ENCODE measurements at regions of chr2 and their contacts with region 1.

Region 1: GRCh38 chr2:177195194-177195593 is 17.4 kb upstream of the HNRNPA3 start:
- DNase-seq: peak in 1 of 3 donors; percentile 7
- H3K4me3 ChIP-seq: no peak overlapping the region
- H3K27ac ChIP-seq: no peak overlapping the region
- H3K4me1 ChIP-seq: no peaks in the 10 kb centered on the region
- H3K27me3 ChIP-seq: no peaks in the 10 kb centered on the region

Region 2: DNA sequence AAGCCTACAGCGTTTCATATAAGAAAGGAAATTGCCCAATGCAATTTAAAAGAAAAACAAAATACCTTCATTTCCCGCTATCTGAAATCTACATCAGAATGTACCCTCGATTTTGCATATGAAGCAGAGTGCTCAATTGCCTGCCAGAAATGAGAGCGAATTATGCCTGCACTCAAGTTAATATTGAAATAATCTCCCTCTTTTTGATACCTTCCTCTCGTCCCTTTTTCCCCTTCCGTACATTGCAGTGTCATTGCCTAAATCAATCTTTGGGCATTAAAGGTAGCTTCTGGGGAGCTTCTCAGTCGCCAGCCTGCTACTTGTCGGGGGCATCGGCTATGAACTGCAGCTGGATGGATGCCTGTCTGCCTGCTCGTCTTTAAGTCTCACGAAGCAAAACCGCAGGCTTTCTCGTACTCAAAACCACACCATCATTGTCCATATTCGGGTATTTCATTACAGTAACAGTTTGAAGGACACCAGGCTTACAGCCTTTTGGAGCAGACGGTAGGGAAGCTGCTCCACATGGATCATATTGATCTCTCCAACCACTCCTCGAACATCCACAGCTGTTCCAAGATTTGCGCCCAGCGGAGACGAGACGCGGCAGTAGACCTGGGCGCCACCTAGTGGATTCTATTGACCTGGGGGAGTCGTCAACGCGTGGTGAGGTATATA is 46.6 kb before region 1 on chr2:
- CTCF ChIA-PET with region 1: no interaction called
- POLR2A ChIA-PET with region 1: no interaction called
- DNase-seq: peak; percentile 73 to 88 (median 80)
- H3K4me3 ChIP-seq: peak overlapping the region in 6 of 7 experiments; percentile 63 to 76 (median 66)
- H3K27ac ChIP-seq: no peak overlapping the region
- H3K4me1 ChIP-seq: peaks cover under 1 to 13% (median 9%) of the 10 kb centered on the region in 4 experiments
- H3K27me3 ChIP-seq: peaks cover 0 to 25% (median 9%) of the 10 kb centered on the region in 5 experiments

Region 3: DNA sequence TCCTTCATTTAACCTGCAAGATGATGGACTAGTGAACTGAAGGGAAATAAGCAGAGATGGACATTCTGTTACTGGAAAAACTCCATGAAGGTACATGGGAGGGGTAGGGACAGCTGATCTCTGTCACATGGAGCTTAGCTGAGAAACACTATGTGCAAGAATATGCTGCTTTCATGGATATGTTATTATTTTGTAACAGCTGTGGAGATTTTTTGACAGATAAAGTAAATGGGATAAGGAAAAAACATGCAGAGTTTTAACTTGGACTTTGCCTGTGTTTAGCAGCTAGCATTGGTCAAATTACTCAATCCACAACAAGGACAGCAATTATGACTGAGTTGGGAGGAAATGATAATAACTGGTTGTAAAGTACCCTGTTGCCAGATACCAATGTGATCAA is 11.3 kb before region 1 on chr2:
- CTCF ChIA-PET with region 1: interaction called, 14 read pairs
- POLR2A ChIA-PET with region 1: no interaction called
- DNase-seq: no peak
- H3K4me3 ChIP-seq: no peak overlapping the region
- H3K27ac ChIP-seq: no peak overlapping the region
- H3K4me1 ChIP-seq: no peaks in the 10 kb centered on the region
- H3K27me3 ChIP-seq: no peaks in the 10 kb centered on the region

Region 4: DNA sequence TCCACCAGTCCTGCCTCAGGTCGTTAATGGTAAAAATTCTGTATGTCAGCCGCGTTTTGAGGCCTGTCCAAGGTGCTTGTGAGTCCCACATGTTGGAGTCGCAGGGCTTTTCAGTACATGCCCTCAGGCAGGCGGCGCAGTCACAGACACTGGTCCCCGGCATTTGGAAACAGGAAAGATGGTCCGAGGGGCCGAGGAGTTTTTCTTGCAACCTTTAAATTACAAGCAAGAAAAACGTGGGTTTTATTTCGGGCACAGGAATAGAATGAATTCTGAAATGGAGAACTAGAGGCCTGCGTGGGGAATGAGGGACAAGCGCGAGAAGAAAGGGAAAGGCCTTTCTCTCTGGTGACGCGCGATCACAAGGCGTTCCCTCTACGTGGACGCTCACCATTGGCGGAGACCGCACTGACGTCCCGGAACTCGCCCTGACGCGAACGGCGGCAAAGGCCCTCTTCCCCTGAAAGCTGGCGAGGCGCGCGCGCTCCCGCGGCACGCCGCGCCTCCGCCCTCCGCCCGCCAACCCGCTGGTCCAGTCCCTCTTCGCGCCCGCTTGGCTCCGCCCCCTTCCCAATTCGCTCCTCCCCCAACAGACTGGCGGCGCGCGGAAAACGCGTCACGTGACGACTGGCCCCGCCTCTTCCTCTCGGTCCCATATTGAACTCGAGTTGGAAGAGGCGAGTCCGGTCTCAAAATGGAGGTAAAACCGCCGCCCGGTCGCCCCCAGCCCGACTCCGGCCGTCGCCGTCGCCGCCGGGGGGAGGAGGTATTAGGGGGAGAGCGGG is 17.1 kb after region 1 on chr2 and contains the start of gene HNRNPA3:
- CTCF ChIA-PET with region 1: interaction called, 10 read pairs
- POLR2A ChIA-PET with region 1: interaction called, 5 read pairs
- DNase-seq: peak; percentile 99 to 100 (median 99)
- H3K4me3 ChIP-seq: peak within 1 kb of the TSS; percentile 55 to 97 (median 85)
- H3K27ac ChIP-seq: peak within 1 kb of the TSS; percentile 100
- H3K4me1 ChIP-seq: peaks cover 20 to 36% (median 29%) of the 10 kb centered on the region in 4 experiments
- H3K27me3 ChIP-seq: no peaks in the 10 kb centered on the region

Measured in common myeloid progenitor, CD34-positive (primary cell).